MCF 10A (cell line): ENCODE measurements at regions of chr4 and their contacts with region 1.

Region 1: GRCh38 chr4:102826890-102827673 is at the start of gene UBE2D3:
- DNase-seq: peak; percentile 90
- H3K4me3 Mint-ChIP-seq: no peak within 1 kb of the TSS
- H3K27ac Mint-ChIP-seq: no peak within 1 kb of the TSS
- H3K4me1 Mint-ChIP-seq: peaks cover 11% of the 10 kb centered on the region
- H3K27me3 Mint-ChIP-seq: no peaks in the 10 kb centered on the region
- CTCF ChIP-seq: no peak
- total RNA-seq, gene UBE2D3: 505 and 547 TPM in 2 replicates

Region 2: GRCh38 chr4:102500696-102501446 is 326.2 kb before region 1 on chr4 and contains the start of gene NFKB1:
- CTCF ChIA-PET with region 1: interaction called, 4 read pairs
- POLR2A ChIA-PET with region 1: interaction called, 40 read pairs
- intact Hi-C with region 1: loop called (anchors 5 kb)
- DNase-seq: peak; percentile 85
- H3K4me3 Mint-ChIP-seq: peak within 1 kb of the TSS; percentile 95
- H3K27ac Mint-ChIP-seq: peak within 1 kb of the TSS; percentile 96
- H3K4me1 Mint-ChIP-seq: peaks cover 17% of the 10 kb centered on the region
- H3K27me3 Mint-ChIP-seq: no peaks in the 10 kb centered on the region
- CTCF ChIP-seq: no peak
- total RNA-seq, gene NFKB1: 40.1 and 70.9 TPM in 2 replicates

Region 3: DNA sequence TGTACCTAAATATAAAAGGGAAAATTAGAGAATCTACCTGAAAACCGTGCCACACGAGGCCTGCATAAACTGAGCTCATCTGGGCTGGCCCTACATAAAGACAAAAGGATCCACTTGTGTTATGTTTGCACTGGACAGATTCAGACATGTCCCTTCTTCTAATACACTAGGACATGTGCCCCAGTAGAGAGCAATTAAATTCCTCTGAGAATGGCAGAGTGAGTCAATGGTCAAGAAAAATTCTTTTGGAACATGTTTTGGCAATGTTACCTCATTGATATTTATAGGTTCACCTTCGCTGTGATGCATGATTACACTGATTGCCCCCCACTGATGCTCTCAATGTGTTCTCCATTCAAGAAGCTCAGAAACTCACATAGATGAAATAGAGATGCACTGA is 161.6 kb before region 1 on chr4:
- CTCF ChIA-PET with region 1: interaction called, 5 read pairs
- POLR2A ChIA-PET with region 1: interaction called, 23 read pairs
- intact Hi-C with region 1: no loop called
- DNase-seq: peak; percentile 55
- H3K4me3 Mint-ChIP-seq: no peak overlapping the region
- H3K27ac Mint-ChIP-seq: peak overlapping the region; percentile 89
- H3K4me1 Mint-ChIP-seq: peaks cover 19% of the 10 kb centered on the region
- H3K27me3 Mint-ChIP-seq: no peaks in the 10 kb centered on the region
- CTCF ChIP-seq: no peak

Region 4: GRCh38 chr4:102730968-102731534 is 96.0 kb before region 1 on chr4:
- CTCF ChIA-PET with region 1: no interaction called
- POLR2A ChIA-PET with region 1: no interaction called
- intact Hi-C with region 1: no loop called
- DNase-seq: no peak
- H3K4me3 Mint-ChIP-seq: no peak overlapping the region
- H3K27ac Mint-ChIP-seq: no peak overlapping the region
- H3K4me1 Mint-ChIP-seq: peaks cover 18% of the 10 kb centered on the region
- H3K27me3 Mint-ChIP-seq: no peaks in the 10 kb centered on the region
- CTCF ChIP-seq: no peak

Region 5: GRCh38 chr4:102809190-102809589 is 17.9 kb before region 1 on chr4:
- CTCF ChIA-PET with region 1: interaction called, 7 read pairs
- POLR2A ChIA-PET with region 1: interaction called, 44 read pairs
- intact Hi-C with region 1: no loop called
- DNase-seq: no peak
- H3K4me3 Mint-ChIP-seq: no peak overlapping the region
- H3K27ac Mint-ChIP-seq: peak overlapping the region; percentile 88
- H3K4me1 Mint-ChIP-seq: peaks cover 46% of the 10 kb centered on the region
- H3K27me3 Mint-ChIP-seq: no peaks in the 10 kb centered on the region
- CTCF ChIP-seq: no peak

Region 6: DNA sequence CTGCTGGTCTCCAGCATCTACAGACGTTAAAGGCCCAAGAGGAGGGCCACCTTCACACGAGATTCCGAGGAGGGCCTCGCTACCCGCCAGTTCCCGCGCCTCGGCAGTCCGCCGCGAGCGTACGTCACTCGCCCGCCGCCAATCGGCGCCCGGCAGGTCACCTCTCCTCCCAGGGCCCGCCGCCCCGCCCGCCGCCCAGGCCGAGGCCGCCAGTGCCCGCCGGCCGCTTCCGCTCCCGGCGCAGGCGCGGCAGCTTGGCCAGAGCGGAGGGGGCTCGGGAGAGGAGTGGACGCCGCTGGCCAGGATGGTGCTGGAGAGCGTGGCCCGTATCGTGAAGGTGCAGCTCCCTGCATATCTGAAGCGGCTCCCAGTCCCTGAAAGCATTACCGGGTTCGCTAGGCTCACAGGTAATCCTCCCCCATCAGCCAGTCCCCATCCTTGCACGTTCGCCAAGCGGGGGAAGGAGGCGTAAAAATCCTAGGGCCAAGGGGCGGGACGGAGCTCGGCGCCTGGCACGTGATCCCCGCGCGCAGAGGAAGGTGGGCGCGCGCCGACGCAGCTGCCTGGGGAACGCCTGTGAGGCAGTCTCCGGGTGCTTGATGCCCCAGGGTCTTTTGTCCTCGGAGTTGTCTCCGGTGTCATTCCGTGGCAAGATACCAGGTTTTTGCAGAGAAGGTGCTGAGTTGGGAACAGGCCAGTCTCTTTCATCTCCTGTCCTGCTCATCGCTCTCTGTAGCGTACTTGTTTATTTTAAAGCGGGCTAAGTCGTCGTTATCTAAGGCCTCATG is 41.9 kb after region 1 on chr4 and contains the start of gene CISD2:
- CTCF ChIA-PET with region 1: interaction called, 16 read pairs
- POLR2A ChIA-PET with region 1: interaction called, 287 read pairs
- intact Hi-C with region 1: loop called (anchors 1 kb)
- DNase-seq: peak; percentile 95
- H3K4me3 Mint-ChIP-seq: peak within 1 kb of the TSS; percentile 98
- H3K27ac Mint-ChIP-seq: peak within 1 kb of the TSS; percentile 98
- H3K4me1 Mint-ChIP-seq: peaks cover 21% of the 10 kb centered on the region
- H3K27me3 Mint-ChIP-seq: no peaks in the 10 kb centered on the region
- CTCF ChIP-seq: no peak
- total RNA-seq, gene CISD2: 35.5 and 35.8 TPM in 2 replicates

Region 7: DNA sequence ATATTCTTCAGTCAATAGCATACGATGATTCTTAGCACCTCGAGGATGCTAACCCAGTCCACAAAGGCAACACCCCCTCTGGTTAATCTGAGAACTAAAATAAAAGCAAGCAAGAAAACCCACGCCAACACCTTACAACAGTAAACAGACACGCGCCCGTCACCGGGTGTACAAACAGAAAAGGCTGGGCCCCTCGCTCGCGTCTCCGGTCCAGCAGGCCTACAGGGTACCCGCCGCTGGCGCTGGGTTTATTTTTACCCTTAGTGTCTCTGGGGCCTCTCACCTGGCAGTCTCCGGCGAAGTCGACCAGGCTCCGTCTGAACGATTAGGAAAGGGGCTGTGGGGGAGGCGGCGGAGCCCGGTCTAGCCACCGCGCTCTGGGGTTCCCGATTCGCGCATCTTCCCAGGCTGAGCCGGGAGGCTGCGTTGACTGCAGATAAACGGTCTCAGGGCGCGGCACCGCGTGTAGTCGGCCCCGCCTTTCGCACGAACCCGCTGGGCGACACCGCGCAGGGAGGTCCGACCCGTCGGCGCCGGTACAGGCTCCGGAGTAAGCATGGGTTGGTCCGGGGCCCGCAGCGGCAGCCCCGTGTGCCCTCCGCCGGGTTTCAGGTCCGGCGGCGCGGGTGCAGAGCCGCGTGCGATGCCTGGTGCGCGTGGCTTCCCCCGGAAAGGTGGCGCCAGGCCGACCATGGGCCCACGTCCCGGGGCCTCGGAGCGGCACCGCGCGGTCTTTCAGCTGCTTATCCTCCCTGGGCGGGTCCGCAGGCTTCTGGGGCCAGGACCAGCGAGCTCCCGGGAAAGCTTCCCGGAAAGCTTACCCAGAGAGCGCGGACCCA is 249.0 kb after region 1 on chr4:
- CTCF ChIA-PET with region 1: no interaction called
- POLR2A ChIA-PET with region 1: interaction called, 82 read pairs
- intact Hi-C with region 1: loop called (anchors 1 kb)
- DNase-seq: peak; percentile 74
- H3K4me3 Mint-ChIP-seq: peak overlapping the region; percentile 93
- H3K27ac Mint-ChIP-seq: peak overlapping the region; percentile 92
- H3K4me1 Mint-ChIP-seq: peaks cover 20% of the 10 kb centered on the region
- H3K27me3 Mint-ChIP-seq: no peaks in the 10 kb centered on the region
- CTCF ChIP-seq: no peak